Heart right ventricle (tissue), 16 donors: ENCODE measurements at regions of chr7 and their contacts with region 1.

Region 1: DNA sequence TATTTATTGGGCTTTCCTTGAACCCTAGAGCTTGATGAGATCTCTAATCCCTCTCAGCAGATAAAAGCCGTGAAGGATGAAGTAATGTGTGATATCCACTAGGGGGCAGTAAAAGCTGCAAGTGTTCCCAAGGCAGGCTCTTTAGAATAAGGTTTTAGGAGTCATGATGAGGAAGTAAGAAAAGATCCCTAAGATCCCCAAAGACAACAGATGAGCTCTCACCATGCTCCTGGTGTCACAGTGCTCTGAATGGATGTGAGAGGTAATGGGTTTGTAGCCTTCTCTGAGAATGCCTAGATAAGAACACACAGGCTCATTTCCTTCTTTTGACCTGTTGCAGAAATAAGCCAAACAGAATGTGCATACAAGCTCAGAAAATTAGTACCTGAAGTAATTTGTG is 70.4 kb upstream of the ITPRID1 start:
- DNase-seq: no peak
- ATAC-seq: peak in 1 of 8 donors; percentile 28
- H3K4me3 ChIP-seq: no peak overlapping the region
- H3K27ac ChIP-seq: no peak overlapping the region
- H3K4me1 ChIP-seq: no peaks in the 10 kb centered on the region
- H3K27me3 ChIP-seq: peaks cover 0 to 45% (median 27%) of the 10 kb centered on the region in 7 donors
- CTCF ChIP-seq: peak; percentile 46 to 85 (median 78)

Region 2: DNA sequence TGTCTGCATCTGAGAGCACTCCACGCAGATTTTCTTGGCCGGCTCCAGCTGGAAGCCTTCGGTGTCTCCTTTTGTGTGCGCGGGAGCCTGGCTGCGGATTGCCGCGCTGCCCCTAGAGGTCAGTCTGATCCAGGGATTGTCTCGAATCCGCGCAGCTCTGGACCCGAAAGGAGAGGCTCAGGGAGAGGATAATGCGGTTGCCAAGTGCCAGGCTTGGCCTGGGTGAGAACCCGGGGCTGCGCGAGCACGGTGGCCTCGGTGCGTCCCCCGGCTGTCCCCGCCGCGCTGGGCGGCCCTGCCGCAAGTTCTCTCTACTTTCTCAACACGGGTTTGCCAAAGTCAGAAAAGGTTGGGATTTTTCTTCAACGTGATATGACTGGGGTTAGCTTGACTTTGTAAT is 250.5 kb before region 1 on chr7:
- intact Hi-C with region 1: loop called in 1 of 10 experiments (anchors 5 kb)
- DNase-seq: peak; percentile 38 to 54
- ATAC-seq: peak; percentile 44 to 93 (median 72)
- H3K4me3 ChIP-seq: peak overlapping the region in 1 of 10 donors; percentile 10
- H3K27ac ChIP-seq: no peak overlapping the region
- H3K4me1 ChIP-seq: peaks cover 0 to 6% (median 0%) of the 10 kb centered on the region in 9 donors
- H3K27me3 ChIP-seq: peaks cover 0 to 45% (median 21%) of the 10 kb centered on the region in 7 donors
- CTCF ChIP-seq: peak; percentile 28 to 82 (median 65)

Region 3: GRCh38 chr7:31311552-31311951 is 131.9 kb before region 1 on chr7:
- intact Hi-C with region 1: no loop called
- DNase-seq: no peak
- ATAC-seq: peak in 3 of 8 donors; percentile 28 to 38 (median 34)
- H3K4me3 ChIP-seq: no peak overlapping the region
- H3K27ac ChIP-seq: no peak overlapping the region
- H3K4me1 ChIP-seq: peaks cover 0 to 10% (median 0%) of the 10 kb centered on the region in 9 donors
- H3K27me3 ChIP-seq: peaks cover 0 to 61% (median 6%) of the 10 kb centered on the region in 7 donors
- CTCF ChIP-seq: no peak

Region 4: GRCh38 chr7:31327071-31327470 is 116.4 kb before region 1 on chr7:
- intact Hi-C with region 1: no loop called
- DNase-seq: no peak
- ATAC-seq: no peak
- H3K4me3 ChIP-seq: no peak overlapping the region
- H3K27ac ChIP-seq: no peak overlapping the region
- H3K4me1 ChIP-seq: no peaks in the 10 kb centered on the region
- H3K27me3 ChIP-seq: peaks cover 0 to 20% (median 0%) of the 10 kb centered on the region in 7 donors
- CTCF ChIP-seq: no peak

Region 5: DNA sequence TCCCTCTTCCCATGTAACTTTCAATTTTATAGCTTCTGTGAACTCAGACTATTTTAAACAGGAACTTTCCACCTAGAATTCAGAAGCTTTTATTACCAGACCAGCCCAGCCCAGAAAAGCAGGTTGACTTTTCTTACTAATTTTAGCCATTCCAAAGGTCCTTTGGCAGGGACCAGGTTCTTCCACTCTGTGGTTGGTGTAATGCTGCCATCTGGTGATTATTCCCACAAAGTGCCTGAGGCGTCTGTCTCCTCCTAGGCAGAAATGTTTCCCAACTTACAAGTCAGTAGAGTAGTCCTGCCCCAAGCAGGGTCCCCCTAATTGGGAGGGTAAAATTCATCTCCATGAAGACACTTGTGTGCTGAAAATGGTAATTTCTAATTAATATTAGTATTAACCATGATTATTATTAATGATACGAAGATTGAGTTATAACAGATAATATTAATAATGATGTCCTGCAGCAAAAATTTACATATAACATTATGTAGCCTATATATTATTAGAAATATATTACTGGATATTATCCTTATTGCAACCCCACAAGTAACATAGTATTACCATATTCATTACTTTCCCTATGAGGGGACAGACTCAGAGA is 190.5 kb after region 1 on chr7:
- intact Hi-C with region 1: loop called in 9 of 10 experiments (anchors 2 to 10 kb)
- DNase-seq: peak in 1 of 2 donors; percentile 48
- ATAC-seq: peak; percentile 77 to 88 (median 80)
- H3K4me3 ChIP-seq: no peak overlapping the region
- H3K27ac ChIP-seq: no peak overlapping the region
- H3K4me1 ChIP-seq: peaks cover 0 to 6% (median 0%) of the 10 kb centered on the region in 9 donors
- H3K27me3 ChIP-seq: no peaks in the 10 kb centered on the region
- CTCF ChIP-seq: peak; percentile 42 to 76 (median 67)

Region 6: DNA sequence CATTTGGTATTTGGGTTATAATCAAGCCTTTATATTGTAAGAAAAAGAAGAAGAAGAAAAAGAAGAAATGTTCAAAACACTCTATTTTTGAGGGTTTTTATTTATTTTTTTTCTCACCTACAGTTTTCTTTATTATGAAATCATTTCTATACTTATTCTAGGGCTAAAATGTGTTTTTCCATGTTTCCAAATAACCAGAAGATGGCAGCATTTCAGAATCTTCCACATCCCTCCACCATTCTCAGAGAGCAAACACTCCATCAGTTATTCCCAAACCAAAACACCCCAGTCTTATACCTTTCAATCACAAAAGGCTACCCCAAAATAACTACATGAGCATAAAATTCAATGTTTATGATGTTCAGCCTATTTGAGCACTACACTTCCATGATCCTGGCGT is 204.8 kb after region 1 on chr7:
- intact Hi-C with region 1: loop called in 1 of 10 experiments (anchors 10 kb)
- DNase-seq: no peak
- ATAC-seq: no peak
- H3K4me3 ChIP-seq: no peak overlapping the region
- H3K27ac ChIP-seq: no peak overlapping the region
- H3K4me1 ChIP-seq: peaks cover 0 to 5% (median 0%) of the 10 kb centered on the region in 9 donors
- H3K27me3 ChIP-seq: peaks cover 0 to 5% (median 0%) of the 10 kb centered on the region in 7 donors
- CTCF ChIP-seq: peak in 7 of 9 donors; percentile 9 to 52 (median 45)

Region 7: DNA sequence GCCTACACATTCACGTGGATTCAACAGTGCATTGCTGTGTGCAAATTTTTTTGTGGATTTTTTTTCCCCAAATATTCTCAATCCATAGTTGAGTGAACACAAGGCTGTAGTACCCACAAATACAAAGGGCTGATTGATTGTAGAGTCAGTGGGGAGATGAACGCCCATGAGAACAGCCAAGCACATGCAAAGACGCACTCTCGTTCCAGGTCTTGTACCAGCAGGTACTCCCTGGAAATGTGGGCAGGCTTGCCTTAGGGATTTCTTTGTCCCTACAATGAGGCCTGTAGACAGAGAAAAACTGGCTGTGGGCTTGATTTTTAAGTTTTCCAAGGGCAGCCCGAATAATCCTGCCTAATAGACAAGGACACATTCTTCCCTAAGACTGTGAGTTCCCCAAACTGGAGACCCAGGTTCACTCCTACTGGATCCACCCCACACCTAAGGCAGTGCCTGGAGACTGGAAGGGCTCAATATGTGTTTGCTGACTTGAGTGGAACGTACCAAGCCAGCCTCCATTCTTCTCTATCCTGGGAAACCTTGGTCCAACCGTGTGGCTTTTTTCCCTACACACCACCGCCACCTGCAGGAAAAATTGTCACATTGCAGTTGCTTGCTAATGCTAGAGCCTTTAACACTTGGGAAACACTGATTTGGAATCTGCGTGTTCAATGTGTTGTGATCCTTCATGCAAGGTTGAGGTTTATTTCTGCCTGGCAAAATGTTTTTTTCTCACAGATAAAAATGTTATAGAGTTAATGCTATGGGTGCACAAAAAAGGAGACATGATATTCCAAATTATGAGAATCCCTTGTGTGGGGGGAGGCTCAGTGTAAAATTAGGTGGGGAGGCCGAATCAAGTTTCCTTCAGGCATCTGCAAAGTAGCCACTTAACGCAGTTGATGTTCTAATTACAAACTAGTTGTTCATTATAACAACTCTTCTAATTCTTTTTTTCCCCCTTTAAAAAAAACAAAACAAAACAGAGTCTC is 292.8 kb after region 1 on chr7:
- intact Hi-C with region 1: loop called in 9 of 10 experiments (anchors 1 to 10 kb)
- DNase-seq: peak; percentile 20 to 49
- ATAC-seq: peak in 7 of 8 donors; percentile 53 to 82 (median 74)
- H3K4me3 ChIP-seq: no peak overlapping the region
- H3K27ac ChIP-seq: no peak overlapping the region
- H3K4me1 ChIP-seq: no peaks in the 10 kb centered on the region
- H3K27me3 ChIP-seq: no peaks in the 10 kb centered on the region
- CTCF ChIP-seq: peak; percentile 84 to 88 (median 85)